ENCODE measurements at regions of chr20 and their contacts with region 1.

Region 1: GRCh38 chr20:35619196-35620095 is 3.8 kb downstream of the SPAG4 start:
- DNase-seq: peak; percentile 94
- H3K4me3 Mint-ChIP-seq: peak overlapping the region; percentile 83
- H3K27ac Mint-ChIP-seq: peak overlapping the region; percentile 90
- H3K4me1 Mint-ChIP-seq: peaks cover 45% of the 10 kb centered on the region
- H3K27me3 Mint-ChIP-seq: peaks cover 2% of the 10 kb centered on the region

Region 2: GRCh38 chr20:35454881-35455609 is 164.4 kb before region 1 on chr20 and contains the start of gene CEP250:
- CTCF ChIA-PET with region 1: interaction called, 3 read pairs
- POLR2A ChIA-PET with region 1: interaction called, 4 read pairs
- intact Hi-C with region 1: loop called (anchors 2 kb)
- DNase-seq: peak; percentile 95
- H3K4me3 Mint-ChIP-seq: peak within 1 kb of the TSS; percentile 88
- H3K27ac Mint-ChIP-seq: peak within 1 kb of the TSS; percentile 97
- H3K4me1 Mint-ChIP-seq: peaks cover 28% of the 10 kb centered on the region
- H3K27me3 Mint-ChIP-seq: no peaks in the 10 kb centered on the region
- total RNA-seq, gene CEP250: 47.2 to 60.8 TPM

Region 3: GRCh38 chr20:35601008-35601973 is 18.2 kb before region 1 on chr20:
- CTCF ChIA-PET with region 1: interaction called, 16 read pairs
- POLR2A ChIA-PET with region 1: interaction called, 6 read pairs
- intact Hi-C with region 1: loop called (anchors 1 kb)
- DNase-seq: peak; percentile 89
- H3K4me3 Mint-ChIP-seq: peak overlapping the region; percentile 67
- H3K27ac Mint-ChIP-seq: no peak overlapping the region
- H3K4me1 Mint-ChIP-seq: peaks cover 9% of the 10 kb centered on the region
- H3K27me3 Mint-ChIP-seq: peaks cover 18% of the 10 kb centered on the region

Region 4: GRCh38 chr20:35771689-35772562 is 152.5 kb after region 1 on chr20 and contains the start of gene PHF20:
- CTCF ChIA-PET with region 1: interaction called, 3 read pairs
- POLR2A ChIA-PET with region 1: interaction called, 4 read pairs
- intact Hi-C with region 1: loop called (anchors 1 kb)
- DNase-seq: peak; percentile 100
- H3K4me3 Mint-ChIP-seq: peak within 1 kb of the TSS; percentile 82
- H3K27ac Mint-ChIP-seq: peak within 1 kb of the TSS; percentile 85
- H3K4me1 Mint-ChIP-seq: peaks cover 64% of the 10 kb centered on the region
- H3K27me3 Mint-ChIP-seq: no peaks in the 10 kb centered on the region
- total RNA-seq, gene PHF20: 49.1 to 50.5 TPM

Region 5: DNA sequence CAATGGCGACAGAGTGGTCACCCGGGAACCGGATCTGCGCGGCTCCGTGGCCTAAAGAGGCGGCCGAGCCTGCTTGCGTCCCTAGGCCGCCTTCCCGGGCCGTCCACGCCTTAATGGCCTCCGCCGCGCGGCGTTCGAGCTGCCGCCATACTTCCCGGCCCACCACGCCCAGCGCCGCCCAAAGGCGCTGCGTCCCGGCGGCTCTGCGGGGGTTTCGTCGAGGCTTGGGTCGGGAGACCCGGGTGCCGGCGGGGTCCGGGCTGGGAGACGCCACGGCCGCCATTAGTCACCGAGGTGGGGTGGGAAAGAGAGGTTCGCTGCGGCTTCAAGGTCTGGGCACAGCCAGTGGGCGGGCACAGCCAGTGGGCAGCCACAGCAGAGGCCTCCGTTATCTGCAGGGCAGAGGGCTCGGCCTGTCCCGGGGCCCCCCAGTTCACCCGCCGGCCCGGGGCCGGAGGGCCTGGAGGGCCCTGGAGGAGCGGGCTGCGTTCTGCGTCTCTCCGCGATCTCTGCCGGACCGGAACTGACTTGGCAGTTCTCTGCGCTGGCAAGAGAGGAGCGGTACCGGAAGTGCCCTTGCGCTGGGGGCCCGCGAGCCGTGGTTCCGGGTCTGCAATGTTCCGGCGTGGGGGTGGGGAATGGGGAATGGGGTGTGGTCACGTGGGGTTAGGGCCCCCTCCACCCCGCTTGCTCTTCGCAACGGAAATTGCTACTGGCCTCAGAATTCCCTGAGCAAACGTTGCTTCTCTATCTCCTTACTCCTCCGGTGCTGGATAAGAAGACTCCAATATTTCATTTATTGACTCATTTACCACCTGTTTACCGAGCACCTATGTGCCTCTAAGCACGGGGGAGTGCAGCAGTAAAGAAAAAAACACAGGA is 431.2 kb after region 1 on chr20:
- CTCF ChIA-PET with region 1: no interaction called
- POLR2A ChIA-PET with region 1: no interaction called
- intact Hi-C with region 1: loop called (anchors 5 kb)
- DNase-seq: peak; percentile 95
- H3K4me3 Mint-ChIP-seq: peak overlapping the region; percentile 94
- H3K27ac Mint-ChIP-seq: peak overlapping the region; percentile 94
- H3K4me1 Mint-ChIP-seq: peaks cover 32% of the 10 kb centered on the region
- H3K27me3 Mint-ChIP-seq: peaks cover 6% of the 10 kb centered on the region

Measured in activated CD4-positive, alpha-beta memory T cell treated with anti-CD3 and anti-CD28 coated beads for 36 hours (primary cell).